Right ventricle myocardium superior (tissue), 1 donor: ENCODE measurements at regions of chr4 and their contacts with region 1.

Region 1: GRCh38 chr4:84503495-84504437 is 4.7 kb upstream of the NKX6-1 start:
- DNase-seq: no peak
- ATAC-seq: peak; percentile 74

Region 2: DNA sequence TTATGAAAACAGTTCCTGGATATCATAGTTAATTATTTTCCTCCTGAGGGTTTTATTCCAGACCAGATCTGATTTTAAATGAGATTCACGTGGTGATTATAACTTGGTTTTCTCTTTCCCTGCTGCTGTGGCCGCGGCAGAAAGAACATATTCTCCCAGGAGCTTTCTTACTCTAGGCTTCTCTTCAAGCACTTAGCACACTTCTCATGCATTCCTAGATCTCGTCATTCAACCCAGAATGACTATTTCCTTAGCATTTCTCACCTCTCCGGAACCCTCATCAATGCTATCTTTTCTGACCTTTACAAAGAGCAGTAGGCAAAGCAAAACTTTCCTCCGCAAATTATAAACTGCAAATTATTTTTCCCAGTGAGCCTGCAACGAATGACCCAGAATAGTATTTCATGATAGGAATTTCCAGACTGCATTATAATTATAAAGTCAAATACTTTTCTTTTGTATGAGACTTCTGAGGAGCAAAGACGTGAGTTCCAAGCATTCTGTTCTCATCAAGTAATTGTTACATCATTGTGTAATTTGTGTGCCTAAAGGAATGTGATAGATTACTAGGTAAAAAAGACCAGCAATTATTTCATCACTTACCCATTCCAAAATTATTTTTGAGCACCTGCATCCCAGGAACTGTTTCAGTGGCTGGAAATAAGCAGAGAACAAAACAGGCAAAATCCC is 844.8 kb before region 1 on chr4:
- intact Hi-C with region 1: loop called (anchors 10 kb)
- DNase-seq: no peak
- ATAC-seq: no peak

Region 3: DNA sequence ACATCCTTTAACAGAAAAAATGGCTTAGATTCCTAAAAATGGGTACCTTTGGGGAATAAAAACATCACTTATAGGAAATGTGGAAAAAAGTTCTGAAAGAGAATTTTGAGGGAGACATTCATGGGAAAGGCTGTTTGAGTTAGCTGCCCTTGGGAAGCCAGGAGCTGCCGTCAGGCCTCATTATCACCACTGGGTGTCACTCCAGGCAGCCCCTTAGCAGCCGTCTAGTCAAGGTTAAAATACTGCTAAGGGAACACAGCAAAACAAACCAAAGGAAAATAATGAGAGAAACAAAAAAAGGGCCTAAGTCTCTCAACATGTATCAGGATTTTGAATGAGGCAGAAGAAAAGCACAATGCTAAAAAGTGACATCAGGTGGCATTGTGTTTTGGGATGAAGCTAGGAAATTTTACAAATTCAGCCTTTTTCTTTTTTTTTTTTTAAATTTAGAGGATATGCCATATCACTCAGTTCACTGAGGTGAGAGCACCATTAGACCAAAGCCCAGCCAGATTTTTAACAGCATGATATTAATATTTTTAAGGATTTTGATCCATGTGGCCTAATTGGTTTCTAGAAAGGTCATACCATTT is 732.6 kb before region 1 on chr4:
- intact Hi-C with region 1: loop called (anchors 10 kb)
- DNase-seq: peak; percentile 45
- ATAC-seq: peak; percentile 85